ENCODE measurements at regions of chr3 and their contacts with region 1.

Region 1: DNA sequence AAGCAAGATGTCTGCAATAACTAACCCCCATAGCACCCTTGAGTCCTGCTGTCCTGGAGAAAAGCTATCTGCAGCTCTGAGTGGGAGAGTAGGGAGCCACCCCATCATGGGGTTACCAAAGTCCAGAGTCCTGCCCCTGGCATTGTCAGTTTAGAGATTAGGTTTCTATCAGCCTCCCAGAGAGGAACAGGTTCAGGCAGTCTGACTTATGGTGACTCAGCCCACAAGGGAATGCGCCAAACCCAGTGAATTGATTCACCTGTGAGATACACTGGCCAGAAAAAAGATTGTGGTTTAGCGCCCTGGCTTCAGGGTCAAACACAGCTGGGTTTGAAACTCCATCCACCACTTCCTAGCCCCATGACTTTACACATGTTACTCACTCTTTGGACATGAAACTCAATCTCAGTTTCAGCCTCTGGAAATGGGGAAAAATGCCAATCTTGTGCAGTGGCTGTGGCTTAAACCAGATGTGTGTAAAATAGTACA is 263.6 kb upstream of the HES1 start:
- DNase-seq: peak in 1 of 2 donors; percentile 32
- ATAC-seq: peak; percentile 95 to 97 (median 96)
- H3K4me3 ChIP-seq: no peak overlapping the region
- H3K27ac ChIP-seq: peak overlapping the region; percentile 41
- H3K4me1 ChIP-seq: peaks cover 15% of the 10 kb centered on the region
- H3K27me3 ChIP-seq: no peaks in the 10 kb centered on the region
- CTCF ChIP-seq: no peak

Region 2: DNA sequence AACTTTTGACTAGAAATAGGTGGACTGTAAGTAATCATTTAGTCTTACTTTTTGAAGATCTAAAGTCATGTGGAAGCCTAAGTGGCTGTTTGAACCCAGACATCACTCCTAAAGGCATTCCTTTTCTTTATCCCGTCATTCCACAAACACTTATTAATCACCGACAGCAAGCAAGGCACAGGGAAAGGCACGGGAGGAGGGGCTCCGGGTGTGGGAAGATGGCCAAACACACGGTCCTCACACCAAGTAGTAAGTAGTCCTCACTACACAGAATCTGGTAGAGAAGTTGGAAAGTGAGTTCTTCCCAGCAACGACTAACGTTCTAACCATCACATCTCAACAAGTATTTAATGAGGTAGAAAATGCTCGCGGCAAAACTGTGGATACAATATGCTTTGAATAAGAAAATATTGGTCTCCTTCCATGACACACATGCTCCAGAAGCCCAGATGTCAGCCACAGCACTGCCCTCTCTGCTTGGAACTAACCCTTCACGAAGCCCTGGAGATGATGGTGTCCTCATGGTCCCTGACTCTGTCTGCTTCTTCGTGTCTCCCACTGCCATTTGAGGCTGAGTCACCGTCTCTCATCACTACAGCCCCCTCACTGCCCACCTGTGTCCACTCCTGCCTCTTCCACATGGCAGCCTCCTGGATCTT is 77.1 kb before region 1 on chr3:
- intact Hi-C with region 1: loop called in 1 of 2 experiments (anchors 5 kb)
- DNase-seq: no peak
- ATAC-seq: no peak
- H3K4me3 ChIP-seq: no peak overlapping the region
- H3K27ac ChIP-seq: no peak overlapping the region
- H3K4me1 ChIP-seq: no peaks in the 10 kb centered on the region
- H3K27me3 ChIP-seq: peaks cover 0 to 4% (median 0%) of the 10 kb centered on the region in 3 donors
- CTCF ChIP-seq: no peak